Activated naive CD4-positive, alpha-beta T cell treated with anti-CD3 and anti-CD28 coated beads for 36 hours (primary cell): ENCODE measurements at regions of chr2 and their contacts with region 1.

Region 1: DNA sequence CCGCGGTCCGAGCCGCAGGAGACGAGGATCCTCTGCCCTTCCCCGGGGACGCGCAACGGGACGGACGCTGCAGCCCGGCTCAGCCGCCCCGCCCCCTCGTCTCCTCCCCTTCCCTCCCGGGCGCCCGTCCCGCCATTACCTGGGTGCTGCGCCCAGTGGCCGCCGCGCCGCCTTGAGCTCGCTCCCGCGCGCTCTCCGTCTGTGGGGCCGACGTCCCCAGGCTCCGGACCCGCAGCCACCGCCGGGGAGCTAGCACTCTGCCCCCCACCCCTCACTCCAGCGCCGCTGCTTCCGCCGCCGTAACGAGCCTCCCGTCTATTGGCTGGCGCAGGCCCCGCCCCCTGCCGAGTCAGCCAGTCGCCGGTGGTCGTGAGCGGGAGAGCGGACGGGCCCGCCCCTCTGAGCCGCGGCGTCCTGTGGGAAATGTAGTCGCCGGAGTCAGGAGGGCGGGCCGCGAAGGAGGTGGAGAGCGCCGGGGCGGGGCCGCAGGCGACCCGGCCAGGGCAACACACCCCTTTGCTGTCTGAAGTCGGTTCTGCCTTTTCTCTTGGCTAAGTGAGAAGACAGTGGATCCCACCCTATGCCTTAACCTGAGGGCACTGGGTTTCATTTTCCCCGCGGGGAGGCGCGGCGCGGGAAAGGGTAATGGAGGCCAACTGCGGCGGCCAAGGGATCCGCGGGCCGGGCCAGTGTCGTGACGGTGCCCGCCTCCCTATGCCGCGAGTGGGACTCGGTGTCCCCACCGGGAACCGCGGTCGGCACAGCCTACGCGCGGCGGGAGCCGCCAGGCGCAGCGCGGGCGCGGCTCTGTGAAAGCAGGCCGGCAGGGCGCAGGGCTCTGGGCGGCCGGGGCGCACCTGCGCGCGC is at the start of gene SAP130:
- DNase-seq: peak; percentile 98
- H3K4me3 Mint-ChIP-seq: peak within 1 kb of the TSS; percentile 97
- H3K27ac Mint-ChIP-seq: peak within 1 kb of the TSS; percentile 72
- H3K4me1 Mint-ChIP-seq: peaks cover 11% of the 10 kb centered on the region
- H3K27me3 Mint-ChIP-seq: no peaks in the 10 kb centered on the region
- total RNA-seq, gene SAP130: 20.4 to 20.5 TPM

Region 2: GRCh38 chr2:127293748-127294562 is 734.1 kb before region 1 on chr2 and contains the start of gene ERCC3:
- CTCF ChIA-PET with region 1: no interaction called
- intact Hi-C with region 1: loop called (anchors 5 kb)
- DNase-seq: peak; percentile 88
- H3K4me3 Mint-ChIP-seq: peak within 1 kb of the TSS; percentile 99
- H3K27ac Mint-ChIP-seq: peak within 1 kb of the TSS; percentile 95
- H3K4me1 Mint-ChIP-seq: peaks cover 25% of the 10 kb centered on the region
- H3K27me3 Mint-ChIP-seq: no peaks in the 10 kb centered on the region
- total RNA-seq, gene ERCC3: 37.0 to 41.1 TPM

Region 3: GRCh38 chr2:127591221-127591923 is 436.7 kb before region 1 on chr2:
- CTCF ChIA-PET with region 1: no interaction called
- intact Hi-C with region 1: loop called (anchors 5 kb)
- DNase-seq: peak; percentile 78
- H3K4me3 Mint-ChIP-seq: no peak overlapping the region
- H3K27ac Mint-ChIP-seq: no peak overlapping the region
- H3K4me1 Mint-ChIP-seq: no peaks in the 10 kb centered on the region
- H3K27me3 Mint-ChIP-seq: no peaks in the 10 kb centered on the region

Region 4: DNA sequence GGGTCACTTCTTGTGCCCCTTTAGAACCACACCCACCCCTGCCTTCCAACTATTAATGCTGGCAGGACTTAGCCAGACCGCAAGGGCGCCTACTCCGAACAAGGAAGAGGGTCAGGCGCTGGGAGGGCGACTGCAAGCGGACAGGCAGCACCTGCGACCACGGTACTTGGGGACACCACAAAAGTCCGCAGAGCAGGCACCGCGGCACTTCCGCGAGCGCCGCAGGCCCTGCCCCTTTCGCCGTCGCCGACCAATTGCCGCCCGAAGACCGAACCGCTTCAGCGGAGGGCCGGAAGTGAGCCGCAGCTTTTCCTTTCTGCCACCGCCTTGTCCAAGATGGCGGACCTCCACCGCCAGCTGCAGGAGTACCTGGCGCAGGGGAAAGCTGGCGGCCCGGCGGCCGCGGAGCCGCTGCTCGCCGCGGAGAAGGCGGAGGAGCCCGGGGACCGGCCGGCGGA is 326.8 kb before region 1 on chr2 and contains the start of gene SFT2D3:
- CTCF ChIA-PET with region 1: no interaction called
- intact Hi-C with region 1: loop called (anchors 2 kb)
- DNase-seq: peak; percentile 94
- H3K4me3 Mint-ChIP-seq: peak within 1 kb of the TSS; percentile 88
- H3K27ac Mint-ChIP-seq: peak within 1 kb of the TSS; percentile 95
- H3K4me1 Mint-ChIP-seq: peaks cover 38% of the 10 kb centered on the region
- H3K27me3 Mint-ChIP-seq: no peaks in the 10 kb centered on the region
- total RNA-seq, gene SFT2D3: 3.1 to 3.3 TPM

Region 5: DNA sequence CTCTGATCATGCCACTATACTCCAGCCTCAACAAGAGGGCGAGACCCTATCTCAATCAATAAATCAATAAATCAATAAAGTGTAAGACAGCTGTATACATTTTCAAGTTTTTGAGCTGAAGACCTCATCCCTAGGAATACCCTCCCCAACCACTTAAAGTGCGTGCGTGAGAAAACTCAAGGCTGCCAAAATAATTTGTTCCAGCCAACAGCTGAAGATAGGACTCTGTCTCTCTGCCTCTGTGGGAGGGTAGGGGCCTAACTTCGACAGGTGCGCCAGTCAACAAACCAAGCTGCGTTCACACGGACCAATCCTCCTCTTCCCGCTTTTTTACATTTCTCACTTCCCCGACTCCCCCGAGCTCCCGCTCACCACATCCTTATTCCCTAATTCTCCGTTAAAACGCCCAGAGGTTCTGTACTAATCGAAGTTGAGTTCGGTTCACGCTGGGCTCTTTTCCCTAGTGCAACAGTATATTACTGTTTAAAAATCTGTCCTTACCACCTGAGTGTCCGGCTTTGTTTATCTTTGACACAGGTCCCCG is 170.7 kb before region 1 on chr2:
- CTCF ChIA-PET with region 1: no interaction called
- intact Hi-C with region 1: loop called (anchors 1 kb)
- DNase-seq: peak; percentile 32
- H3K4me3 Mint-ChIP-seq: peak overlapping the region; percentile 99
- H3K27ac Mint-ChIP-seq: peak overlapping the region; percentile 91
- H3K4me1 Mint-ChIP-seq: peaks cover 53% of the 10 kb centered on the region
- H3K27me3 Mint-ChIP-seq: no peaks in the 10 kb centered on the region

Region 6: GRCh38 chr2:127901339-127902056 is 126.5 kb before region 1 on chr2:
- CTCF ChIA-PET with region 1: no interaction called
- intact Hi-C with region 1: no loop called
- DNase-seq: no peak
- H3K4me3 Mint-ChIP-seq: no peak overlapping the region
- H3K27ac Mint-ChIP-seq: no peak overlapping the region
- H3K4me1 Mint-ChIP-seq: no peaks in the 10 kb centered on the region
- H3K27me3 Mint-ChIP-seq: peaks cover 4% of the 10 kb centered on the region

Region 7: DNA sequence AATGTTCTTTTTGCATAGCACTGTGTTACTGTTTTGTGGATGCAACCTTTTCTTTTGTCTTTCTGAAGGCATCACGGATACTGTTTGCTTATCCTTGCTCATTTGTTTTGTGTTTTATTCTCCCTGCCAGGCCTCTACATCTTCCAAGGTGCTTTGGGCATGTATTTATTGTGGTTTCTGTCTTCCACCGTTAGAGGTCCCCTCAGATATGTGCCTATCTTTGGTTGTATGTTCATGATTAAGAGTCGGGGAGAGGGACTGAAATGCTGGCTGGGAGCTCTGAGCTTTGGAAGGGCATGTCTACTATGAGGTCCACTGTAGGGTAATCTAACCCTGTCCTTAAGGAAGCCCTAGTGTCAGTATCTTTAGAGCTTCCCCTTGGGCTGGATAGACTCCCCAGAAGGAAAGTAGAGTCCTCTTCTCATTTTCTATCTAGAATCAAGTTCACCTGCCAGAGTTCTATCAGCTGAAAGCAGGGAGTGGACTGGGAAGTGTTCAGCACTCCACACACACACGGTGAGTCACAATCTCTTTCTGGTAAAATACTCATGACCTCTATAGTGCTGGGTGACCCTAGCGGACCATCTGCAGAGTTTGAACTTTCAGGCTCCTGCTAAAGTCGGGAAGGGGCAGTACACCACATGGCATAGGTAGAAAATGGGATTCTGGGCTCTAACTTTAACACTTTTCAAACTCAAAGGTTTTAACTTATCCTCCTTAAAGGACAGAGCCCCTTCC is 43.7 kb before region 1 on chr2:
- CTCF ChIA-PET with region 1: no interaction called
- intact Hi-C with region 1: no loop called
- DNase-seq: no peak
- H3K4me3 Mint-ChIP-seq: no peak overlapping the region
- H3K27ac Mint-ChIP-seq: no peak overlapping the region
- H3K4me1 Mint-ChIP-seq: no peaks in the 10 kb centered on the region
- H3K27me3 Mint-ChIP-seq: no peaks in the 10 kb centered on the region

Region 8: DNA sequence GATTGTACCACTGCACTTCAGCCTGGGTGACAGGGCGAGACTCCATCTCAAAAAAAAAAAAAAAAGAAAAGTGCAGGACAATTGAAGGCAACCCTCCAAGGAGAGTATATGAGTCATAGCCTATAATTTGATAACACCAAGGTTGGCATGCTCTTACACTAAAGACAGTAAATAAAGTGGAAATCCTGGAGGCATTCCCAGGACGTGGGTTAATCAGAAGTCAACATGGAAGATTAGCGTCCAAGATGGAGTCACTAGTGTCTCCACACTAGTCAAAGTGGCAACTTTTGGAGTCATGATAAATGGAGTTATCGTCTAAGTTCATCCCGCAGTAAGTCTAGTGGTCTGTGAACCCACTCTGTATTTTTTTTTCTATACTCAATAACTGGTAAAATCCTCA is 41.7 kb after region 1 on chr2:
- CTCF ChIA-PET with region 1: no interaction called
- intact Hi-C with region 1: no loop called
- DNase-seq: no peak
- H3K4me3 Mint-ChIP-seq: no peak overlapping the region
- H3K27ac Mint-ChIP-seq: no peak overlapping the region
- H3K4me1 Mint-ChIP-seq: no peaks in the 10 kb centered on the region
- H3K27me3 Mint-ChIP-seq: no peaks in the 10 kb centered on the region

Region 9: GRCh38 chr2:128090945-128091725 is 63.1 kb after region 1 on chr2 and contains the start of gene UGGT1:
- CTCF ChIA-PET with region 1: no interaction called
- intact Hi-C with region 1: loop called (anchors 1 kb)
- DNase-seq: peak; percentile 96
- H3K4me3 Mint-ChIP-seq: peak within 1 kb of the TSS; percentile 90
- H3K27ac Mint-ChIP-seq: peak within 1 kb of the TSS; percentile 86
- H3K4me1 Mint-ChIP-seq: peaks cover 42% of the 10 kb centered on the region
- H3K27me3 Mint-ChIP-seq: no peaks in the 10 kb centered on the region
- total RNA-seq, gene UGGT1: 37.3 to 40.1 TPM

Region 10: GRCh38 chr2:129877289-129877779 is 1849.3 kb after region 1 on chr2:
- CTCF ChIA-PET with region 1: no interaction called
- intact Hi-C with region 1: loop called (anchors 2 kb)
- DNase-seq: peak; percentile 91
- H3K4me3 Mint-ChIP-seq: peak overlapping the region; percentile 92
- H3K27ac Mint-ChIP-seq: peak overlapping the region; percentile 89
- H3K4me1 Mint-ChIP-seq: peaks cover 6% of the 10 kb centered on the region
- H3K27me3 Mint-ChIP-seq: no peaks in the 10 kb centered on the region